GM13976 (cell line): ENCODE measurements at regions of chr10 and their contacts with region 1.

Region 1: GRCh38 chr10:94279835-94280709 is 82.7 kb downstream of the NOC3L start:
- DNase-seq: peak; percentile 36
- CTCF ChIP-seq: peak; percentile 96

Region 2: GRCh38 chr10:93893646-93894515 is 386.2 kb before region 1 on chr10 and contains the start of gene SLC35G1:
- in situ Hi-C with region 1: no loop called
- DNase-seq: peak; percentile 94
- CTCF ChIP-seq: no peak

Region 3: DNA sequence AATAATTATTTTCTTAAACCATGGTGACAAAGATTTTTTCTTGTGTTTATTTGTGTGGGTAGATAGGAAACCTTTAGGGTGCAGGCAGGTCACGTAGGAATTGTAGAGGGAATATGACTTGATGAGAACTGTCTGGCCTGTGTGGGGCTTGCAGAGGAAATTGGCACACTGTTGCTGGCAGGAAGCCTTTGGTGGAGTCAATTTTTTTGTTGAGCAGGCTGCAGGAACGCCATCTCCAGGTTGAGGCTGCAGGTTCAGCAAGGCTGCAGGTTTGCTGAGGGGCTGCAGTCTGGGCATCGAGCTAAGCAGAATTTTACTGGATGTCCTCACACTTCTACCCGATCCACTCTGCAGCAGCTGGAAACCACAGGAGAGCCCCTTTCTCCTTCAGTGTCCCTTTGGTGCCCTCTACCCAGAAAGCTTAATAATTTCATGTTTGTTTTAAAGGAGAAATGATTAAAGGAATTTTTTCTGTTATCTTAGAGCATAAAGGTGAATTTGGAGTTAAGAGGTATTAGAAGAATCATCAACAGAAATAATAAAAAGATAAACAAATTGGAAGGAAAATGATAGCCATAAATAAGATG is 159.3 kb after region 1 on chr10:
- in situ Hi-C with region 1: loop called (anchors 10 kb)
- DNase-seq: no peak
- CTCF ChIP-seq: no peak

Region 4: GRCh38 chr10:94936721-94937120 is 656.6 kb after region 1 on chr10:
- in situ Hi-C with region 1: no loop called
- DNase-seq: no peak
- CTCF ChIP-seq: no peak